Posterior cingulate gyrus (tissue), 11 donors: ENCODE measurements at regions of chr10 and their contacts with region 1.

Region 1: GRCh38 chr10:15491856-15492642 is 121.0 kb upstream of the FAM171A1 start:
- DNase-seq: no peak

Region 2: DNA sequence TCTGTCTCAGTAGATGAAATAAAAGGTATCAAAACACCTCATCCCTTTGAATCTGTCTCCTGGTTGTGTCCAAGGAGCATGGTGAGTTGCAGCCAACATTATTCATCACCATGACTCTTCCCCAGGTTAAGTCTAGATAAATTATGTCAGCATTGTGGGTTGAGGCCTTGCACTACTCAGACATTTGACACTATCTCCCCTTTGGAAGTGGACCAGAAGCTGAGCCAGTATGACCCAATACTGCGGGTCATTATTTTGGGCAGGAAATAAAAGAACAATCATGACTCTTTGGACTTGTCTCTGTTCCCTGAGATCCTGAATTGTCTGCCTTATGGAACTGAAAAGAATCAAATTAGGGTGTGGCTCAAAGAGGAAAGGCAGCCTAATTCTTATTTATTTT is 47.2 kb after region 1 on chr10:
- intact Hi-C with region 1: loop called (anchors 1 kb)
- DNase-seq: no peak